Activated CD4-positive, alpha-beta T cell treated with anti-CD3 and anti-CD28 coated beads, Interleukin-2, amount 10 ng/mL, durations not matched to agents 24 days and 14 days (primary cell): ENCODE measurements at regions of chr10 and their contacts with region 1.

Region 1: DNA sequence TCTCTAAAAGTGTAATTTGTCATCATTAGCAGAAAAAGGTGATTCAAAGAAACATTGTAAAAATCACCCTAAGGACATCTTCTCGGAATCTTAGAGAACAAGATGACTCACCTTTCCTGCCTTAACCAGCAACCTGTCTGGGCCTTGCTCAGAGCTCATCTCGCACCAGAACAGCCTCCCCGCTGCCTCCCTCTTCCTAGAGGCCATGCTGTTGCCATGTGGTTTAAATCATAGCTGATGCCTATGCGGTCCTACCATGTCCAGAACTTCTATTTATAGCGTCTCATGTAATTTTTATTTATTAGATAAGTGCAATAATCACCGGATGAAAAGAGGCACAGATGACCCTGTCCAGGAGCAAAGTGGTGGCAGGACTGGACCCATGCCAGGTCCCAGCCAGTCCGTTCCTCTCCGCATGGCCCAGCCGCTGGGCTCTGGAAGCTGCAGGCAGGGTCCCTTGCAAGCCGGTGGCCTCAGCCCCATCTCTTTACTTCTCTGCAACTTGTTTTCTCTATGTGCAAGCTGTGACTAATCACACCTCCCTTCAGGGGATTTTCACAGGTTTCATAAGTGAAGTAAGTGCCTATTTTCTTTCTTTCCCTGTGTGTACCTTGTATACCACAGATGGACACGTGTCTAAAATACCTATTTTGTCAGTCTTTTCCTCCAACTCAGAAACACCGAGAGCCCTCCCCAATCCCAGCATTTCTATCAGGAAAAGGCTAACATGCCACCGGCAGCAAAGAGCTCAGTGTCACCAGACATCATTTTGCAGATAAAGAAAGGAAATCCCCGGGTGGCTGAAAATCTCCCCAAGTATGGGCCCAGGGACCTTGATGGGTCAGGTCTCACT is 27.1 kb downstream of the KLF6 start:
- DNase-seq: peak; percentile 90
- H3K4me3 Mint-ChIP-seq: peak overlapping the region; percentile 82
- H3K27ac Mint-ChIP-seq: peak overlapping the region; percentile 100
- H3K4me1 Mint-ChIP-seq: peaks cover 71% of the 10 kb centered on the region
- H3K27me3 Mint-ChIP-seq: no peaks in the 10 kb centered on the region

Region 2: DNA sequence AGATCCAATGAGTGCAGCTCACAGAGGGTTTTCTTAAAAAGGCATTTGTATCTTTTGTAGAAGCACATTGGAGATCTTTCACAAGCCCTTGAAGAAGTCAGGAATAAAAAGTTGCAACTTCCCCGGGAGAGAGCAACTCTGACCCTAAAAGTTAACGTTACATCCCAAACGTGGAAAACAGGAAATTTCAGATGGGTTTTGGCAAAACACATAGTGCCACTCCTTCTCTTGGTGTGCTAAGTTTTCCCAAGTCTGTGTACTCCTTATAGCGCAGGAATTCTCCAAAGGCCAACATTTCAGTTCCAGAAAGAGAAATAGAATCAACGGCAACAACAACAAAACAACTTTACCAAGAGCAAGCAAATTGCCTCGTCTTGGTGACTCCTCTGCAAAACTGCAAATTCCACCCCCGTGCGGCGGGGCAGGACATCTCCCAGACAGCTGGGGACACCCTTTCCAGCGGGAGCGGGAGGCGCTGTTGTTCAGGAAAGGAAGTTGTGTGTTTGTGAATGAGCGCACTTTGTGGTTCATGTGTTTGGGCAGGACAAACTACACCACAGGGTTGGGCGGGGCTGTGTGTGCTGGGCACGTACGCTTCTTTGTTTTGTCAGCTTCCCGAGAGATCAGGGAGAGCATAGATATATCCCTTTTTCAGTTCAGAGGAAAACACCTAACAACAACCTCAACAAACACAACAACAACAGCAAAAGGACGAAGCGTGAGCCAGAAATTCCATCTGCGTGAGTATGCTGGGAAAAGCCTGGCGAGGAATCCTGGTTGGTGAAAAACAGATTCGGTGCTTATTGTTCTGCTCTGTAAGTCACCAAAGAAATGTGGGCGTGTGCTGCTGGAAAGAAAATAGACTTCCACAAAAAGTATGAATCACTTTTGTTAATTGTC is 290.6 kb before region 1 on chr10:
- intact Hi-C with region 1: loop called (anchors 5 kb)
- DNase-seq: peak; percentile 79
- H3K4me3 Mint-ChIP-seq: peak overlapping the region; percentile 82
- H3K27ac Mint-ChIP-seq: peak overlapping the region; percentile 96
- H3K4me1 Mint-ChIP-seq: peaks cover 51% of the 10 kb centered on the region
- H3K27me3 Mint-ChIP-seq: no peaks in the 10 kb centered on the region

Region 3: GRCh38 chr10:3605882-3606281 is 152.0 kb before region 1 on chr10:
- intact Hi-C with region 1: loop called (anchors 1 kb)
- DNase-seq: no peak
- H3K4me3 Mint-ChIP-seq: no peak overlapping the region
- H3K27ac Mint-ChIP-seq: no peak overlapping the region
- H3K4me1 Mint-ChIP-seq: peaks cover 4% of the 10 kb centered on the region
- H3K27me3 Mint-ChIP-seq: peaks cover 16% of the 10 kb centered on the region

Region 4: GRCh38 chr10:3689871-3690510 is 67.9 kb before region 1 on chr10:
- intact Hi-C with region 1: loop called (anchors 5 kb)
- DNase-seq: no peak
- H3K4me3 Mint-ChIP-seq: no peak overlapping the region
- H3K27ac Mint-ChIP-seq: peak overlapping the region; percentile 47
- H3K4me1 Mint-ChIP-seq: peaks cover 13% of the 10 kb centered on the region
- H3K27me3 Mint-ChIP-seq: no peaks in the 10 kb centered on the region

Region 5: GRCh38 chr10:3776796-3777571 is 19.1 kb after region 1 on chr10:
- intact Hi-C with region 1: loop called (anchors 1 kb)
- DNase-seq: peak; percentile 89
- H3K4me3 Mint-ChIP-seq: peak overlapping the region; percentile 76
- H3K27ac Mint-ChIP-seq: peak overlapping the region; percentile 86
- H3K4me1 Mint-ChIP-seq: peaks cover 61% of the 10 kb centered on the region
- H3K27me3 Mint-ChIP-seq: no peaks in the 10 kb centered on the region

Region 6: DNA sequence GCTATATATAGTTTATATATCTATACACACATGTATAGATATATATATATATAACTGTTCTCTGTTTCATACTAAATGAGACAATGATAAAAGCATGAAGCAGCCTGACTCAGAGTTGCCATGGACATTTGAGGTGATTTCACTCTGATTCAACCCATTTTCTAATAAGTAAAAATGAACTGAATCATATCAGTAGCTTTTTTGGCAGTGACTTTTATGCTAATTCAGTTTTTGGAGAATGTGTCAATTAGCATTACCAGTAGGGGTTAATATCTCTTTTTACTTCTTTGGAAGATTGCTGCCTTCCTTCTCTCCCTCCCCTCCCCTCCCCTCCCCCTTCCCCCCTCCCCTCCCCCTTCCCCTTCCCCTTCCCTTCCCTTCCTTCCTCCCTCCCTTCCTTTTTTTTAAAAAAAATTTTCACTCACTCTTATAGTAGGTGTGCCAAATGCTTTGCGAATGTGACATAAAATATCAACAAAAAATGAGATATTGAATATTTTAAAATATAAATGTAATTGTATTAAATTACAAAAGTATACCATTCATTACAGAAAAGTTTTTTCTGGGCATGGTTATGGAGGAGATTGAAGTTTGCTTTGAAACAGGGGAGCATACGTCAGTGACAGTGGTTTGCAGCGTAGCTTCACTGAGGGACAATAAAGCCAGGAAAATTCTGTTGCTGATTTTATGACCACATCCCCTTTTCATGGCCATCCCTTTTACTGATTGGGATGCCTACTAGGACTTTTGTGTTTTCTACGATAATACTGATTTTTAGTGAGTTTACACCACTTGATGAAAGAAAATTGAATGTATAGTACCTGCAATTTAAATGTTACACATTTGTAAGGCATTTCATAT is 91.1 kb after region 1 on chr10:
- intact Hi-C with region 1: no loop called
- DNase-seq: no peak
- H3K4me3 Mint-ChIP-seq: no peak overlapping the region
- H3K27ac Mint-ChIP-seq: no peak overlapping the region
- H3K4me1 Mint-ChIP-seq: peaks cover 38% of the 10 kb centered on the region
- H3K27me3 Mint-ChIP-seq: no peaks in the 10 kb centered on the region

Region 7: DNA sequence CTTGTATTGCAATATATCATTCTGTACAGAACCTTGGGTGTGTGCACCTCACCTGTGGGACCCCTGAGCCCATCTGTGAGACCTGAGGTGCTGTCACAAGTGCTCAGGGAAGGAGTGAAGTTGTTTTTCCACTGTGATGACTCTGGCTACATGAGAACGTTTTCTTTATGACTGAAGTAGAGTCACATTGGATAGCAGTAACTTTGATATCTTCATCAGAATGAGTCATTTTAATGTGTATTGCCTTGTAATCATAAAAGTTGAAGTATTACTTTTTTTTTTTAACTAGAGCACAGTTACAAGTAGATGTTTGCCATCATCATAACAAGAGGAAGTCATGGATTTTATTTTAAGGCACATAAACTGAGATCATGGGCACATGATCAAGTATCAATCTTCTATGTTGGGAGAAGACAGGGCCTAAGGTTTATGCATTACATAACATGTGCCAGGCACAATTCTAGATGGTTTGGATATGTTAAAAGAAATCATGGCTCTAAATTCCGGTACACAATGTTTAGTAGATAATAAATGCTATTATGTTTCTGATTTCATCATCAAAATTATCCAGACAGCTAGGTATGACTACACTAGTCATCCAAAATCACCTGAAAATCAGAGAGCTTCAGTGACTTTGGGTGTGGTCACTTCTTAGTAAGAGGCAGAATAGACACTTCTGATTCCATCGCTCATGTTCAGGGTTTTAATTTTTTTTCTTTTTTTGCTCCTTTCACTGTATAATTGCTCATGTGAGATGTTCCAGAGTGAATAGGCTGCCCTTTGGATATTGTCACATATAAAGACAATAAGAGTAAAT is 109.8 kb after region 1 on chr10:
- intact Hi-C with region 1: loop called (anchors 2 kb)
- DNase-seq: no peak
- H3K4me3 Mint-ChIP-seq: no peak overlapping the region
- H3K27ac Mint-ChIP-seq: peak overlapping the region; percentile 91
- H3K4me1 Mint-ChIP-seq: peaks cover 61% of the 10 kb centered on the region
- H3K27me3 Mint-ChIP-seq: no peaks in the 10 kb centered on the region